Activated CD8-positive, alpha-beta T cell treated with anti-CD3 and anti-CD28 coated beads for 36 hours (primary cell): ENCODE measurements at regions of chr2 and their contacts with region 1.

Region 1: GRCh38 chr2:85635636-85636035 is 19.6 kb downstream of the USP39 start:
- DNase-seq: no peak
- ATAC-seq: no peak
- H3K4me3 Mint-ChIP-seq: no peak overlapping the region
- H3K27ac Mint-ChIP-seq: no peak overlapping the region
- H3K4me1 Mint-ChIP-seq: peaks cover 11% of the 10 kb centered on the region
- H3K27me3 Mint-ChIP-seq: no peaks in the 10 kb centered on the region
- CTCF ChIP-seq: no peak

Region 2: GRCh38 chr2:85383850-85384249 is 251.8 kb before region 1 on chr2:
- CTCF ChIA-PET with region 1: no interaction called
- POLR2A ChIA-PET with region 1: no interaction called
- intact Hi-C with region 1: no loop called
- DNase-seq: no peak
- ATAC-seq: no peak
- H3K4me3 Mint-ChIP-seq: no peak overlapping the region
- H3K27ac Mint-ChIP-seq: no peak overlapping the region
- H3K4me1 Mint-ChIP-seq: no peaks in the 10 kb centered on the region
- H3K27me3 Mint-ChIP-seq: no peaks in the 10 kb centered on the region
- CTCF ChIP-seq: no peak

Region 3: GRCh38 chr2:85619617-85620016 is 16.0 kb before region 1 on chr2:
- CTCF ChIA-PET with region 1: interaction called, 61 read pairs
- POLR2A ChIA-PET with region 1: interaction called, 9 read pairs
- intact Hi-C with region 1: no loop called
- DNase-seq: no peak
- ATAC-seq: no peak
- H3K4me3 Mint-ChIP-seq: no peak overlapping the region
- H3K27ac Mint-ChIP-seq: no peak overlapping the region
- H3K4me1 Mint-ChIP-seq: peaks cover 28% of the 10 kb centered on the region
- H3K27me3 Mint-ChIP-seq: no peaks in the 10 kb centered on the region
- CTCF ChIP-seq: no peak

Region 4: DNA sequence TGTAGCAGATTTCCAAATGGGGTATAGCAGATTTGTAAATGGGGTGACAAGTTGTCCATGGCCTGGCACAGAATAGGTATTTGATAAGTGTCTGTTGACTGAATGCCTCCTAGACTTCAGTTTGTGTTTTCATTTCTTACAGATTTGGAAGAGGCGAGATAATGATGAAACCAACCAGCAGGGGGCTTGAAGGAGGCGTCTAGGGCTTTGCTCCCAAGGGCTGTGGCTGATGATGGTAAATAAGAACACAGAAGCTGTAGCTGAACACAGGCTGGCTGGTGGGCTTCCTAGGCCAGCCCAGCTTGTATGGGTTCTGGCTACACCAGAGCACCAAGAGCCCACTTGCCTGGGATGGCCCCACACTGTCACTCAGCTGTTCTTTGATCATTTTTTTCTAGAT is 13.0 kb after region 1 on chr2:
- CTCF ChIA-PET with region 1: interaction called, 51 read pairs
- POLR2A ChIA-PET with region 1: interaction called, 4 read pairs
- intact Hi-C with region 1: no loop called
- DNase-seq: peak; percentile 30
- ATAC-seq: peak; percentile 39
- H3K4me3 Mint-ChIP-seq: no peak overlapping the region
- H3K27ac Mint-ChIP-seq: no peak overlapping the region
- H3K4me1 Mint-ChIP-seq: no peaks in the 10 kb centered on the region
- H3K27me3 Mint-ChIP-seq: no peaks in the 10 kb centered on the region
- CTCF ChIP-seq: peak; percentile 26

Region 5: GRCh38 chr2:85655961-85656417 is 20.4 kb after region 1 on chr2:
- CTCF ChIA-PET with region 1: interaction called, 51 read pairs
- POLR2A ChIA-PET with region 1: no interaction called
- intact Hi-C with region 1: no loop called
- DNase-seq: no peak
- ATAC-seq: no peak
- H3K4me3 Mint-ChIP-seq: no peak overlapping the region
- H3K27ac Mint-ChIP-seq: no peak overlapping the region
- H3K4me1 Mint-ChIP-seq: no peaks in the 10 kb centered on the region
- H3K27me3 Mint-ChIP-seq: no peaks in the 10 kb centered on the region
- CTCF ChIP-seq: no peak